PC-9 (cell line): ENCODE measurements at regions of chrX and their contacts with region 1.

Region 1: GRCh38 chrX:136856551-136856950 is 24.0 kb downstream of the RBMX start:
- DNase-seq: no peak
- H3K4me3 ChIP-seq: no peak overlapping the region
- H3K27ac ChIP-seq: no peak overlapping the region
- H3K4me1 ChIP-seq: no peaks in the 10 kb centered on the region
- H3K27me3 ChIP-seq: no peaks in the 10 kb centered on the region
- CTCF ChIP-seq: no peak

Region 2: DNA sequence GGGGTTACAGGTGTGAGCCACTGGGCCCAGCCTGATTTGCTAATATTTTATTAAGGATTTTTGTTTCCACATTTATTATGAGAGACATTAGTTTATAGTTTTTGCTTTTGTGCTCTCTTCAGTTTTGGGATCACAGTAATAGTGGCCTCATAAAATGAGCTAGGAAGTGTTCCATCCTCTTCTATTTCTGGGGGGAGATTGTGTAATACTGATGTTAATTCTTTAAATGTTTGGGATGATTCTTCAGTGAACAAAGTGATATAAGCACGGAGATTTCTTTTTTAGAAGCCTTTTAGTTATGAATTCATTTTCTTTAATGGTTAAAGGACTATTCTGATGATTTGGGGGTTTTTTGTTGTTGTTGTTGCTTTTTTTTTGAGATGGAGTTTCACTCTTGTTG is 17.4 kb before region 1 on chrX:
- CTCF ChIA-PET with region 1: interaction called, 10 read pairs
- POLR2A ChIA-PET with region 1: no interaction called
- intact Hi-C with region 1: no loop called
- DNase-seq: no peak
- H3K4me3 ChIP-seq: no peak overlapping the region
- H3K27ac ChIP-seq: no peak overlapping the region
- H3K4me1 ChIP-seq: no peaks in the 10 kb centered on the region
- H3K27me3 ChIP-seq: no peaks in the 10 kb centered on the region
- CTCF ChIP-seq: no peak